HCT116 (cell line): ENCODE measurements at regions of chrX and their contacts with region 1.

Region 1: DNA sequence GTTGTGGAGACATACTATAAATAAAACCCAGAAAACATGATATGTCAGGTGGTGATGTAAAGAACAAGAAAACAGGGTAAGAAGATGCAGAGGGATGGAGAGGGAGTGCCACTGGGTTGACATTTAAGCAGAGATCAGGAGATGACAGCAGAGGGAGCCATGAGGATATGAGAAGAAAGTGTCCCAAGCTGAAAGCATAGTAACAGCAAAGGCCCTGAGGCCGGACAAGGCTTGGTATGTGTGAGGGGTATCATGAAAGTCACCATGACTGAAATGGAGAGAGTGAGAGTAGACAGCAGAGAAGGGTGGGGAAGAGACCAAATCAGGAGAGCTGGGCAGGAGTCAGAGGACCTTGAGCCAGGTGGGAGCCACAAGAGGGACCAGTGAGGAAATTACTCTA is 3.4 kb downstream of the GPKOW start:
- DNase-seq: no peak
- ATAC-seq: no peak
- H3K4me3 ChIP-seq: no peak overlapping the region
- H3K27ac ChIP-seq: no peak overlapping the region
- H3K4me1 ChIP-seq: peaks cover 0 to 10% of the 10 kb centered on the region in 2 experiments; a peak in 2 of 4 replicates
- H3K27me3 ChIP-seq: no peaks in the 10 kb centered on the region
- CTCF ChIP-seq: 0 out of 6 replicates have a peak, but pooled peaks of 1 of the 3 experiments have one; percentile 16
- POLR2A ChIP-seq: no peak
- RAD21 ChIP-seq: no peak

Region 2: GRCh38 chrX:49163555-49164419 is 43.7 kb after region 1 on chrX:
- CTCF ChIA-PET with region 1: no interaction called
- POLR2A ChIA-PET with region 1: no interaction called
- RAD21 ChIA-PET with region 1: no interaction called
- intact Hi-C with region 1: loop called (anchors 5 kb)
- DNase-seq: peak; percentile 63
- ATAC-seq: peak; percentile 75
- H3K4me3 ChIP-seq: peak overlapping the region; percentile 32 to 45
- H3K27ac ChIP-seq: peak overlapping the region; percentile 95
- H3K4me1 ChIP-seq: peaks cover 14 to 57% of the 10 kb centered on the region in 2 experiments
- H3K27me3 ChIP-seq: no peaks in the 10 kb centered on the region
- CTCF ChIP-seq: peak in 2 of 3 experiments; percentile 54 to 55; a peak in 4 of 6 replicates
- POLR2A ChIP-seq: peak; percentile 23
- RAD21 ChIP-seq: no peak

Region 3: GRCh38 chrX:49282647-49283011 is 162.5 kb after region 1 on chrX:
- CTCF ChIA-PET with region 1: no interaction called
- POLR2A ChIA-PET with region 1: no interaction called
- RAD21 ChIA-PET with region 1: no interaction called
- intact Hi-C with region 1: no loop called
- DNase-seq: peak; percentile 13
- ATAC-seq: peak; percentile 94
- H3K4me3 ChIP-seq: no peak overlapping the region
- H3K27ac ChIP-seq: no peak overlapping the region
- H3K4me1 ChIP-seq: peaks cover 0 to 4% of the 10 kb centered on the region in 2 experiments; a peak in 1 of 4 replicates
- H3K27me3 ChIP-seq: no peaks in the 10 kb centered on the region
- CTCF ChIP-seq: peak; percentile 16 to 23 (median 20); a peak in 3 of 6 replicates
- POLR2A ChIP-seq: no peak
- RAD21 ChIP-seq: peak; percentile 36; the same call in 1 of the 2 replicates